CD8-positive, alpha-beta memory T cell (primary cell): ENCODE measurements at regions of chr10 and their contacts with region 1.

Region 1: GRCh38 chr10:97792141-97792721 is 20.4 kb upstream of the SFRP5 start:
- DNase-seq: peak; percentile 58 to 81 (median 60)
- H3K4me3 ChIP-seq: no peak overlapping the region
- H3K4me3 Mint-ChIP-seq: peak overlapping the region in 2 of 7 donors; percentile 5 to 37
- H3K27ac ChIP-seq: no peak overlapping the region
- H3K27ac Mint-ChIP-seq: peak overlapping the region in 3 of 8 donors; percentile 46 to 72 (median 56)
- H3K4me1 ChIP-seq: peaks cover 35% of the 10 kb centered on the region
- H3K4me1 Mint-ChIP-seq: peaks cover 28 to 33% (median 29%) of the 10 kb centered on the region in 3 donors
- H3K27me3 ChIP-seq: peaks cover 3% of the 10 kb centered on the region
- H3K27me3 Mint-ChIP-seq: peaks cover 4 to 5% of the 10 kb centered on the region in 2 donors

Region 2: DNA sequence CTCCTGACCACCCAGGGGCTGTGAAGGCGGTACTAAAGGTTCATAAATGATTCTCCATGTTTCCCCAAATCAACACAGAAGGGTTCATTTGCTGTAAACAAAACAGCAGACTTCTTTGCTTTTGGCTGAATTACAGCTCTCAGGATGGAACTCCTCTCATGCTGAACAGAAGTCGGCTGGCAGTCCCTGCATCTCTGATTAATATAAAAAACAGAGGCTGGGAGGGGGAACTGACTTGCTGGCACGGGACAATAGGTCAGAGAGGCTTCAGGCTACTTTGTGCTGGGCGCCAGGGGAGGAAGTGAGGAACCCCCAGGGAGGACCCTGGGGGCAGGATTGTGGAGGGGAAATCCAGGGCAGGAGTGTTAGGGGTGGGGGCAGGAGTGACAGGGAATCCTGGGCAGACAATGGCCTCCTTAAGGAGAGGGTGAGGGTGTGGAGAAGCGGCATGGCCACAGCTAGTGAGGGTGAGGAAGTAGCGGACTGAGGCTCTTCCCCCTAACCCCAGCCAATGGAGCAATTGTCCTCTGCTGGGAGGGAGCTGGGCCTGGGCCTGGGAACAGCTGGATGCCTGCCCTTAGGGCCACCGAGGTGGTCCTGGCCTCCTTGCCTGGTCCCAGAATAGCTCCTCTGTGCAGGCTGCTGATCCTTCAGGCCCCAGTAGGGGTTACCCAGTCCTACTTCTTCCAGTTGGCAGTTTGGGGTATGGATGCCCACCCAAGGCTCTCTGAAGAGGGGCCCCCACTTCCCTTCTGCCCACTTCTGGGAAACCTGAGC is 11.2 kb before region 1 on chr10:
- CTCF ChIA-PET with region 1: interaction called, 13 read pairs
- POLR2A ChIA-PET with region 1: no interaction called
- DNase-seq: no peak
- H3K4me3 ChIP-seq: peak overlapping the region; percentile 22
- H3K4me3 Mint-ChIP-seq: peak overlapping the region in 1 of 7 donors; percentile 8
- H3K27ac ChIP-seq: no peak overlapping the region
- H3K27ac Mint-ChIP-seq: peak overlapping the region in 5 of 8 donors; percentile 54 to 87 (median 82)
- H3K4me1 ChIP-seq: peaks cover 32% of the 10 kb centered on the region
- H3K4me1 Mint-ChIP-seq: peaks cover 18 to 31% (median 31%) of the 10 kb centered on the region in 3 donors
- H3K27me3 ChIP-seq: no peaks in the 10 kb centered on the region
- H3K27me3 Mint-ChIP-seq: peaks cover 0 to 1% of the 10 kb centered on the region in 2 donors

Region 3: DNA sequence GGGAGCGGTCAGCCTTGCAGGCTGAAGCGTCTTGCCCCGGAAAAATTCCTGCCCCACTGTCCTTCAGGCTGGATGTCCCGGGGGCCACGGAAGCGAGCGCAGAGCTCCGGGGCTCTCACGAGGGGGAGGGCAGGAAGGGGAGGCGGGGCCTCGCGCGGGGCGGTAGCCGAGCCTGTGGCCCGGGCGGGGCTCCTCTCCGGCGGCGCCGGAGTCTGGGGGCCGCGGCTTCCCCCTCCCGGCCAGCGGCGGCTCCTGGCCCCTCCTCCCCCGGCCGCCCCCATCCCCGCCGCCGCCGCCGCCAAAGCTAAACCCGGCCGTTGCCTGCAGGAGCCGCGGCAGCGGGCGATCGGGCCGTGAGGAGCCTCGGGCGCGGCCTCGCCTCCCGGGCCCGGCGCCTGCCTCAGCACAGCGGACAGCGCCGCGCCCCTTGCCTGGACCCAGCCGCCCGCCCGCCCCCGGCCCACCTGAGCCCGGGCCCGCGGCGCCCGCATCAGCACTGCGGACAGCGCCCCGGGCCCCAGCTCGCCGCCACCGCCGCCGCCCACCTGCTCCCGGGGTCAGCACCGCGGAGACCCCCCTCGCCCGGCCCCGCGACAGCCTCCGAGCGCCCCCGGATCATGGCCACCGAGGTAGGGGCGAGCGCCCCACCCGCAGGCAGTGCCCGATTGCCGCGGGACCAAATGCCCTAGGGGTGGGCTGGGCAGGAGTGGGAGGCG is 57.6 kb after region 1 on chr10 and contains the start of gene GOLGA7B:
- CTCF ChIA-PET with region 1: interaction called, 15 read pairs
- POLR2A ChIA-PET with region 1: interaction called, 3 read pairs
- DNase-seq: peak; percentile 56 to 76 (median 63)
- H3K4me3 ChIP-seq: peak within 1 kb of the TSS; percentile 64
- H3K4me3 Mint-ChIP-seq: peak within 1 kb of the TSS; percentile 84 to 95 (median 90)
- H3K27ac ChIP-seq: no peak within 1 kb of the TSS
- H3K27ac Mint-ChIP-seq: peak within 1 kb of the TSS; percentile 70 to 95 (median 86)
- H3K4me1 ChIP-seq: peaks cover 34% of the 10 kb centered on the region
- H3K4me1 Mint-ChIP-seq: peaks cover 36 to 37% (median 36%) of the 10 kb centered on the region in 3 donors
- H3K27me3 ChIP-seq: no peaks in the 10 kb centered on the region
- H3K27me3 Mint-ChIP-seq: no peaks in the 10 kb centered on the region
- total RNA-seq, gene GOLGA7B: 0.29 to 0.44 TPM

Region 4: GRCh38 chr10:97861097-97861750 is 69.0 kb after region 1 on chr10:
- CTCF ChIA-PET with region 1: interaction called, 109 read pairs
- POLR2A ChIA-PET with region 1: no interaction called
- DNase-seq: no peak
- H3K4me3 ChIP-seq: no peak overlapping the region
- H3K4me3 Mint-ChIP-seq: no peak overlapping the region
- H3K27ac ChIP-seq: no peak overlapping the region
- H3K27ac Mint-ChIP-seq: no peak overlapping the region
- H3K4me1 ChIP-seq: no peaks in the 10 kb centered on the region
- H3K4me1 Mint-ChIP-seq: peaks cover 5 to 15% (median 6%) of the 10 kb centered on the region in 3 donors
- H3K27me3 ChIP-seq: no peaks in the 10 kb centered on the region
- H3K27me3 Mint-ChIP-seq: no peaks in the 10 kb centered on the region

Region 5: DNA sequence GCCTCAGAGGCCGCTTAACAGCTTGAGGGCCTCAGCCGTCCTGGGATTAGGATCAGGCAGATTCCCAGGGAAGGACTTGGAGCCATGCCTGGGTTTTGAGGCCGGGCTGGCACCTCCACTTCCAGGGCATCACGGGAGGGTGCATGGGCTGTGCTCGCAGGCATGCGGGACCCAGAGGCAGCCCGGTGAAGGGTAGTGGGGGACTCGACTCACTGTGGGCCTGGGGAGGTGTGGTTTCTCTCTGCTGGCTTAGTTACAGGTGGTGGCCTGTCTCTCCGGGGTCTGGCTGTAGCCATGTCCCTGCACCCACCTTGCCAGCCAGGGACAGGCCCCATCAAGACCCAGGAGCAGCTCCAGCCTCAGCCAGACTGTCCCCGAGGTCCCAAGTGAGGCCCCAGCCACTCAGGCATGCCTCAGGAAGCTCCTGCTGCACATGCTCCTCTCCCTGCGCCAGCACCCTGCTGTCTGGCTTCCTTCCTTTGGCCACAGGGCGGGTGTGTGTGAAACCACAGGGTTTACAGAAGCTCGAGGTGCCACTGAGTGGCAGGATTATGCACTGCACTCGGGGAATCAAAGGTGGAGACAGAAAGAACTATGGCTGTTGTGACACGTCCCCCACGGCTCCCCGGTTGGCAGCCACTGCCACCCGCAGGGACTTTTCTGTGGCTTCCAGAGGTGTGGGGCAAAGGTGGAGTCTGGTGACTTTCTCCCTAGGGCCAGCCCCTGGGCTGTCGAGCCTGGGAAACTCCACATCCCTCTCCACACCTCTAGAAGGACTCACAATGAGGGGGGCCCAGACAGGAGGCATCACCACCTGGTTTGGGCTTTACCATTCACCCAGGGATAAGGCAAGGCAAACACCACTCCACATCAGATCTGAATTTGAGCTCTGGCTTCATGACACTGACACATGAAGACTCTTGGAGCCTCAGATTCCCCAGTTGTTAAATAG is 77.1 kb after region 1 on chr10:
- CTCF ChIA-PET with region 1: interaction called, 109 read pairs
- POLR2A ChIA-PET with region 1: interaction called, 4 read pairs
- DNase-seq: peak; percentile 71 to 90 (median 80)
- H3K4me3 ChIP-seq: peak overlapping the region; percentile 45
- H3K4me3 Mint-ChIP-seq: peak overlapping the region in 6 of 7 donors; percentile 26 to 87 (median 56)
- H3K27ac ChIP-seq: no peak overlapping the region
- H3K27ac Mint-ChIP-seq: peak overlapping the region in 7 of 8 donors; percentile 45 to 95 (median 66)
- H3K4me1 ChIP-seq: peaks cover 17% of the 10 kb centered on the region
- H3K4me1 Mint-ChIP-seq: peaks cover 18 to 21% (median 19%) of the 10 kb centered on the region in 3 donors
- H3K27me3 ChIP-seq: no peaks in the 10 kb centered on the region
- H3K27me3 Mint-ChIP-seq: peaks cover 2 to 11% of the 10 kb centered on the region in 2 donors